H1 (cell line): ENCODE measurements at regions of chr7 and their contacts with region 1.

Region 1: GRCh38 chr7:5494683-5495561 is 71.3 kb upstream of the TNRC18 start:
- DNase-seq: peak in 1 of 2 experiments; percentile 88
- H3K4me3 ChIP-seq: no peak overlapping the region
- H3K27ac ChIP-seq: no peak overlapping the region
- H3K4me1 ChIP-seq: peaks cover 0 to 20% (median 12%) of the 10 kb centered on the region in 4 experiments; a peak in 5 of 7 replicates
- H3K27me3 ChIP-seq: no peaks in the 10 kb centered on the region
- CTCF ChIP-seq: peak in 2 of 3 experiments; percentile 87 to 93; a peak in 3 of 4 replicates
- EP300 ChIP-seq: no peak
- POLR2A ChIP-seq: no peak
- RAD21 ChIP-seq: peak; percentile 94 to 95

Region 2: GRCh38 chr7:5477723-5478531 is 17.0 kb before region 1 on chr7:
- CTCF ChIA-PET with region 1: interaction called, 20 read pairs
- POLR2A ChIA-PET with region 1: no interaction called
- DNase-seq: peak in 1 of 2 experiments; percentile 76
- H3K4me3 ChIP-seq: 0 out of 8 replicates have a peak overlapping the region, but pooled peaks of 1 of the 4 experiments have one; percentile 25
- H3K27ac ChIP-seq: no peak overlapping the region
- H3K4me1 ChIP-seq: peaks cover 0 to 16% (median 8%) of the 10 kb centered on the region in 4 experiments; a peak in 5 of 7 replicates
- H3K27me3 ChIP-seq: no peaks in the 10 kb centered on the region
- CTCF ChIP-seq: peak in 2 of 3 experiments; percentile 56 to 59; a peak in 3 of 4 replicates
- EP300 ChIP-seq: no peak
- POLR2A ChIP-seq: no peak
- RAD21 ChIP-seq: peak; percentile 39 to 49

Region 3: DNA sequence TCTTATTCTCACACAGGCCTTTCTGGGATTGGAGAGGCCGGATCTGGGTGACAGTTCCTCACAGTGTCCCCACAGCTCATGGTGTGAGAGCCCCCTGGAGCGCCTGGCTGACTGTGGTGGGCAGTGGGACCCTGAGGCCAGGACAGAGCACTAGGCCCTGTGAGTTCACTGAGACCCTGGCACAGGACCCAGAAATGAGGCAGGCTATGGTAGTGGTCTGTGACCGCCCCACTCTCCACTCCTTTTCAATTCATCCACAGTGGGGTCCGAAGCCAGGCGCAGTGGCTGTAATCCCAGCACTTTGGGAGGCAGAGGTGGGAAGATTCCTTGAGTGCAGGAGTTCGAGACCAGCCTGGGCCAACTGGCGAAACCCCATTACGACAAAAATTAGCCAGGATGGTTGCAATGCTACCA is 24.6 kb after region 1 on chr7:
- CTCF ChIA-PET with region 1: interaction called, 22 read pairs
- POLR2A ChIA-PET with region 1: interaction called, 3 read pairs
- DNase-seq: peak in 1 of 2 experiments; percentile 67
- H3K4me3 ChIP-seq: no peak overlapping the region
- H3K27ac ChIP-seq: no peak overlapping the region
- H3K4me1 ChIP-seq: no peaks in the 10 kb centered on the region; a peak in 1 of 7 replicates
- H3K27me3 ChIP-seq: no peaks in the 10 kb centered on the region
- CTCF ChIP-seq: no peak
- EP300 ChIP-seq: no peak
- POLR2A ChIP-seq: peak; percentile 70 to 93; a peak in 2 of 3 replicates
- RAD21 ChIP-seq: no peak

Region 4: DNA sequence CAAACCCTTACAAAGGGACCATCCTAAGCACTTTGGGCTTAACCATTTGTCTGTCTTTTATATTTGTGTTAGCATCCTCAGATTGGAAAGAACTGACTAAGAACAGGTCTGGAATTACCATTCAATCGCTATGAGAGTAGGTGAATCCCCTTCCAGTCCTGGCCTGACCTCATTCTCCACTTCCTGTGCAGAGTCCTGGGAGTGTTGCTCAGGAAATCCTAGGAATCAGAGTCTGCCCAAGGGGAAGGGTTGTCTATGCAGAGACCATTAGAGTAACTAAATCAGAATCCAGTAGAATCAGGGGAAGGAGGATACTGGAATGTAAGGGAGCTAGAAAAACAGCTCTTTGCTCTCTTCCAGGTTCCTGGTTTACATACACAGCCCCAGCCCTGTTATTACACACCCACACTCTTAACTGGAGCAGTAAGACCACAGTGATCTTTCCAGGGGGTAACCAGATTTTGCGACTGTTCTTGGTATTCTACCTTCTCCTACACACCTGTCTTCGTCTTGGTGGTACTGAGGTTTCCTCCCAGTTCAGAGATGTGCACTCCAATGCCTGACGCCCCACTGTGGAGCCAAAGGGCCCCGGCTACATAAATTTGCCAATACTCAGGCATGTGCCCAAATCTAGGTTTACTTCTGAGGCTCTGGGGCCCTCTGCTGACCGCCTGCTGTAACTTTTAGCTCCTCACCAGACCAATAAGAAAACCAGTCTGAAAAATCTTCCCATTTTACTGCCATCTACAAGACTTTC is 182.8 kb after region 1 on chr7:
- CTCF ChIA-PET with region 1: interaction called, 61 read pairs
- POLR2A ChIA-PET with region 1: no interaction called
- DNase-seq: peak in 1 of 2 experiments; percentile 78
- H3K4me3 ChIP-seq: no peak overlapping the region
- H3K27ac ChIP-seq: no peak overlapping the region
- H3K4me1 ChIP-seq: peaks cover 2 to 10% (median 6%) of the 10 kb centered on the region in 4 experiments; a peak in 6 of 7 replicates
- H3K27me3 ChIP-seq: no peaks in the 10 kb centered on the region
- CTCF ChIP-seq: peak; percentile 33 to 86 (median 77)
- EP300 ChIP-seq: no peak
- POLR2A ChIP-seq: no peak
- RAD21 ChIP-seq: peak; percentile 90 to 92

Region 5: GRCh38 chr7:5704534-5704922 is 209.6 kb after region 1 on chr7:
- CTCF ChIA-PET with region 1: interaction called, 17 read pairs
- POLR2A ChIA-PET with region 1: interaction called, 3 read pairs
- DNase-seq: peak; percentile 44 to 71
- H3K4me3 ChIP-seq: no peak overlapping the region
- H3K27ac ChIP-seq: no peak overlapping the region
- H3K4me1 ChIP-seq: peaks cover 0 to 3% (median under 1%) of the 10 kb centered on the region in 4 experiments; a peak in 1 of 7 replicates
- H3K27me3 ChIP-seq: no peaks in the 10 kb centered on the region
- CTCF ChIP-seq: peak in 2 of 3 experiments; percentile 81 to 91; a peak in 3 of 4 replicates
- EP300 ChIP-seq: no peak
- POLR2A ChIP-seq: no peak
- RAD21 ChIP-seq: peak; percentile 90